ENCODE measurements at regions of chr5 and their contacts with region 1.

Region 1: GRCh38 chr5:159100025-159100781 is 487 bp upstream of the EBF1 start:
- DNase-seq: peak; percentile 72 to 86 (median 84)
- ATAC-seq: peak; percentile 93
- H3K4me3 ChIP-seq: peak overlapping the region; percentile 59
- H3K4me3 Mint-ChIP-seq: peak overlapping the region; percentile 87 to 93 (median 92)
- H3K27ac ChIP-seq: no peak overlapping the region
- H3K27ac Mint-ChIP-seq: peak overlapping the region; percentile 29 to 89 (median 75)
- H3K4me1 ChIP-seq: peaks cover 13 to 19% of the 10 kb centered on the region in 2 donors
- H3K4me1 Mint-ChIP-seq: peaks cover 31 to 51% (median 35%) of the 10 kb centered on the region in 7 donors
- H3K27me3 ChIP-seq: peaks cover 18 to 22% of the 10 kb centered on the region in 2 donors
- H3K27me3 Mint-ChIP-seq: peaks cover 52 to 92% (median 60%) of the 10 kb centered on the region in 5 donors

Region 2: GRCh38 chr5:158084292-158084691 is 1015.9 kb before region 1 on chr5:
- CTCF ChIA-PET with region 1: no interaction called
- POLR2A ChIA-PET with region 1: no interaction called
- intact Hi-C with region 1: no loop called
- DNase-seq: no peak
- ATAC-seq: no peak
- H3K4me3 ChIP-seq: no peak overlapping the region
- H3K4me3 Mint-ChIP-seq: no peak overlapping the region
- H3K27ac ChIP-seq: no peak overlapping the region
- H3K27ac Mint-ChIP-seq: no peak overlapping the region
- H3K4me1 ChIP-seq: no peaks in the 10 kb centered on the region
- H3K4me1 Mint-ChIP-seq: no peaks in the 10 kb centered on the region
- H3K27me3 ChIP-seq: no peaks in the 10 kb centered on the region
- H3K27me3 Mint-ChIP-seq: peaks cover 17 to 36% (median 23%) of the 10 kb centered on the region in 5 donors

Region 3: DNA sequence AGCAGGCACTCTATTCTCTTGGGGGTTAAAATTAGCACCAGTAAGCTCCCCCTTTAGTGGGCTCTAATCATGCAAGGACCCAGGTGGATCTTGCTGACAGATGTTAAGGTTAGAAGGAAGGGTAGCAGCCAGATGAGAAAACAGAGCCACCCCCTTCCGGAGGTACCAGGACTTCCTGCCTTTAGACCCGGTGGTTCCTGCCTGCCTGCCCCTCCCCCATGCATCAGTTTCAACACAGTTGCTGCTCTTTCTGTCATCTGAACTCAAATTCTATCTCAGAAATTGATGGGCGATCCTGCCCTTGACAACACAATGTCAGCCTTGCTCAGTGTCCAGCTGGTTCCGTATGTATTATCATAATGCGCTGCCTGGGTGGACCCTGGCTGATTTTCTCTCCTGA is 287.8 kb before region 1 on chr5:
- CTCF ChIA-PET with region 1: no interaction called
- POLR2A ChIA-PET with region 1: no interaction called
- intact Hi-C with region 1: loop called in 1 of 2 experiments (anchors 1 kb)
- DNase-seq: peak; percentile 13 to 83 (median 72)
- ATAC-seq: peak; percentile 75
- H3K4me3 ChIP-seq: peak overlapping the region; percentile 26
- H3K4me3 Mint-ChIP-seq: peak overlapping the region; percentile 39 to 81 (median 70)
- H3K27ac ChIP-seq: peak overlapping the region; percentile 42
- H3K27ac Mint-ChIP-seq: peak overlapping the region; percentile 60 to 88 (median 82)
- H3K4me1 ChIP-seq: peaks cover 11 to 25% of the 10 kb centered on the region in 2 donors
- H3K4me1 Mint-ChIP-seq: peaks cover 22 to 70% (median 52%) of the 10 kb centered on the region in 7 donors
- H3K27me3 ChIP-seq: no peaks in the 10 kb centered on the region
- H3K27me3 Mint-ChIP-seq: peaks cover 0 to 7% (median 0%) of the 10 kb centered on the region in 5 donors

Region 4: DNA sequence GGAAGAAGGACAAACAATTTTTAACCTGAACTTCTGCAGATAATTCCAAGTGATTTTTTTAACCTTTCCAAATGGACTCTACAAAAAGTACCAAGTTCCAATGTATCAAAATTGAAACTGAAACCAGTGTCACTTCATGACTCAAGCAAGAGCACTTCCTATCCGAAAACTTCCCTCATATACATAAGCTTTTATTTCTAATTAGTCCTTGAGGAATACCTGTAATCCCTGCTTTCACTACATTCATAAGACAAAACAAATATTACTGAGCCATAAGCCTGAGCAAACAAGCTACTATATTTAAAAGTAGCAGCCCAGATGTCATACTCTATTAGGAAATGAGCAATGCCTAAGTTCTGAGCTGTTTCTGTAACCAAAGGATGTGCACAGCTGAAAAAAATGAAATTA is 224.9 kb before region 1 on chr5:
- CTCF ChIA-PET with region 1: no interaction called
- POLR2A ChIA-PET with region 1: no interaction called
- intact Hi-C with region 1: loop called (anchors 2 to 5 kb)
- DNase-seq: peak in 5 of 9 donors; percentile 0 to 37 (median 20)
- ATAC-seq: peak; percentile 44
- H3K4me3 ChIP-seq: peak overlapping the region; percentile 18
- H3K4me3 Mint-ChIP-seq: peak overlapping the region; percentile 67 to 89 (median 82)
- H3K27ac ChIP-seq: no peak overlapping the region
- H3K27ac Mint-ChIP-seq: peak overlapping the region; percentile 82 to 94 (median 89)
- H3K4me1 ChIP-seq: no peaks in the 10 kb centered on the region
- H3K4me1 Mint-ChIP-seq: peaks cover 8 to 33% (median 28%) of the 10 kb centered on the region in 7 donors
- H3K27me3 ChIP-seq: no peaks in the 10 kb centered on the region
- H3K27me3 Mint-ChIP-seq: peaks cover 0 to 9% (median 4%) of the 10 kb centered on the region in 5 donors

Region 5: DNA sequence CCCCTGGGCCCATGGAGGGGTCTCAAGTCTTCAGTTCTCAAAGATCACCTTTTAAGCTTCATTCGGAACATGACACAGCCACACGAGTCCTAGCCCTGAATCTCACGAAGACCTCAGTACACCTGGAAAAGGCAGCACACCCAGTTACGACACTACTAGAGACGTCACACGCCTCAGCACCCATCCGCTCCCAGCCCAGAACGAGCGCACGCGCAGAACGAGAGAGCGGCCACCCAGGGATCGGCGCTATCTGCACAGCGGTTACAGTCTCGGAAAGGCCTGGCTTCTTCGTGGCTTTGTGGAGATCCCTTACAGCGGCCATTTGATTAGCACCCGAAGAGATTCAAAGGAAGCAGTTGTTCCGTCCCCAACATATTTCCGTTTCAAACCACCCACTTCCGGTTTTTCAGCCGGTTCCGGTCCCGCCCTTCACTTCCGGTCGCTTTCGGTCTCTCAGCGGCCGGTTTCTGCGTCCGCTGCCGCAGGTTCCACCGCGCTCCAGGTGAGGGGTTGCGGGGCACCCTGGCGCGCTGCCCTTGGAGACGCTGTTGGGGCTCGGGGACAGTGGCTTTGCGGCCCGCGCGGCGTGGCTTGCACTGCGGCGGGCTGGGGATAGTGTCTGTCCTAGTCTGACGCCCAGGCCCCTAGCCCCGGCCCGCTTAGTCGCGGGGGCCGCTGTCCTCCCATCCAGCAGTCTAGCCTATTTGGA is 162.8 kb after region 1 on chr5 and contains the start of gene UBLCP1:
- CTCF ChIA-PET with region 1: no interaction called
- POLR2A ChIA-PET with region 1: interaction called, 5 read pairs
- intact Hi-C with region 1: loop called in 1 of 2 experiments (anchors 1 kb)
- DNase-seq: peak; percentile 65 to 88 (median 83)
- ATAC-seq: peak; percentile 91
- H3K4me3 ChIP-seq: peak within 1 kb of the TSS; percentile 76
- H3K4me3 Mint-ChIP-seq: peak within 1 kb of the TSS; percentile 89 to 99 (median 96)
- H3K27ac ChIP-seq: peak within 1 kb of the TSS; percentile 90
- H3K27ac Mint-ChIP-seq: peak within 1 kb of the TSS; percentile 97 to 100 (median 99)
- H3K4me1 ChIP-seq: peaks cover 8 to 17% of the 10 kb centered on the region in 2 donors
- H3K4me1 Mint-ChIP-seq: peaks cover 28 to 65% (median 52%) of the 10 kb centered on the region in 7 donors
- H3K27me3 ChIP-seq: no peaks in the 10 kb centered on the region
- H3K27me3 Mint-ChIP-seq: peaks cover 0 to 4% (median 0%) of the 10 kb centered on the region in 5 donors
- total RNA-seq, gene UBLCP1: 18.2 to 30.9 (median 30.2) TPM